PC-3 (cell line): ENCODE measurements at regions of chr2 and their contacts with region 1.

Region 1: GRCh38 chr2:146119586-146119985 is 1599.7 kb upstream of the ZEB2 start:
- DNase-seq: no peak
- ATAC-seq: no peak
- H3K4me3 ChIP-seq: no peak overlapping the region
- H3K27ac ChIP-seq: no peak overlapping the region
- H3K4me1 ChIP-seq: no peaks in the 10 kb centered on the region
- H3K27me3 ChIP-seq: no peaks in the 10 kb centered on the region
- CTCF ChIP-seq: no peak

Region 2: GRCh38 chr2:146108993-146109392 is 10.6 kb before region 1 on chr2:
- CTCF ChIA-PET with region 1: no interaction called
- POLR2A ChIA-PET with region 1: no interaction called
- intact Hi-C with region 1: loop called (anchors 1 kb)
- DNase-seq: peak; percentile 19
- ATAC-seq: no peak; the same call in 1 of the 2 replicates
- H3K4me3 ChIP-seq: no peak overlapping the region
- H3K27ac ChIP-seq: no peak overlapping the region
- H3K4me1 ChIP-seq: no peaks in the 10 kb centered on the region
- H3K27me3 ChIP-seq: no peaks in the 10 kb centered on the region
- CTCF ChIP-seq: no peak